CD4-positive, alpha-beta T cell (primary cell): ENCODE measurements at regions of chr5 and their contacts with region 1.

Region 1: GRCh38 chr5:106894964-106895363 is 775.8 kb downstream of the EFNA5 start:
- DNase-seq: peak in 2 of 14 experiments; percentile 10 to 18
- ATAC-seq: no peak
- H3K4me3 ChIP-seq: no peak overlapping the region
- H3K4me3 Mint-ChIP-seq: no peak overlapping the region
- H3K27ac ChIP-seq: no peak overlapping the region
- H3K27ac Mint-ChIP-seq: no peak overlapping the region
- H3K4me1 ChIP-seq: no peaks in the 10 kb centered on the region
- H3K4me1 Mint-ChIP-seq: no peaks in the 10 kb centered on the region
- H3K27me3 ChIP-seq: no peaks in the 10 kb centered on the region
- H3K27me3 Mint-ChIP-seq: no peaks in the 10 kb centered on the region
- CTCF ChIP-seq: no peak

Region 2: DNA sequence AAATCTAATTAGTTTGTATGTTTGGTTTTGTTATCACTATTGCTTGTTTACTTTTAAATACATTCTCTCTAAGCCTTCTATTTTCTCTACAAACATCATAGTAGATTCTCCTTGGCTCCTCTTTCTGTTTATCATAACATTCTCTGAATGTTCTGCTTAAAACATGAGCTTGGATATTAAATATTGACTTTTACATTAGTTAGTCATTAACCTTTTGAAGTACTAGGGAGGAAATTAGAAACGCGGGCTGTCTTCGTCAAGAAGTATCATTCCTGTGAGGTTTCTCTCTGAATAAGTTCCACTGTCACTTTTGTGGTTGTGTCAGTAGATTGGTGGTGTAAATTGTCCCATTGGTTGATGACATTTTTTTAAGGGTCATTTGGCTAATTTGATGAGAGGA is 45.7 kb before region 1 on chr5:
- CTCF ChIA-PET with region 1: no interaction called
- POLR2A ChIA-PET with region 1: no interaction called
- intact Hi-C with region 1: loop called in 1 of 2 experiments (anchors 5 kb)
- DNase-seq: no peak
- ATAC-seq: no peak
- H3K4me3 ChIP-seq: no peak overlapping the region
- H3K4me3 Mint-ChIP-seq: no peak overlapping the region
- H3K27ac ChIP-seq: no peak overlapping the region
- H3K27ac Mint-ChIP-seq: no peak overlapping the region
- H3K4me1 ChIP-seq: no peaks in the 10 kb centered on the region
- H3K4me1 Mint-ChIP-seq: no peaks in the 10 kb centered on the region
- H3K27me3 ChIP-seq: no peaks in the 10 kb centered on the region
- H3K27me3 Mint-ChIP-seq: no peaks in the 10 kb centered on the region
- CTCF ChIP-seq: no peak

Region 3: GRCh38 chr5:107092695-107093094 is 197.7 kb after region 1 on chr5:
- CTCF ChIA-PET with region 1: no interaction called
- POLR2A ChIA-PET with region 1: no interaction called
- intact Hi-C with region 1: no loop called
- DNase-seq: no peak
- ATAC-seq: no peak
- H3K4me3 ChIP-seq: no peak overlapping the region
- H3K4me3 Mint-ChIP-seq: no peak overlapping the region
- H3K27ac ChIP-seq: no peak overlapping the region
- H3K27ac Mint-ChIP-seq: no peak overlapping the region
- H3K4me1 ChIP-seq: no peaks in the 10 kb centered on the region
- H3K4me1 Mint-ChIP-seq: no peaks in the 10 kb centered on the region
- H3K27me3 ChIP-seq: no peaks in the 10 kb centered on the region
- H3K27me3 Mint-ChIP-seq: no peaks in the 10 kb centered on the region
- CTCF ChIP-seq: no peak